ENCODE measurements at regions of chr17 and their contacts with region 1.

Region 1: GRCh38 chr17:28644985-28645939 is at the start of gene BLTP2:
- DNase-seq: peak; percentile 97
- ATAC-seq: peak; percentile 97
- H3K4me3 ChIP-seq: peak within 1 kb of the TSS; percentile 79 to 93 (median 81)
- H3K4me3 Mint-ChIP-seq: peak within 1 kb of the TSS; percentile 97
- H3K27ac ChIP-seq: peak within 1 kb of the TSS; percentile 90 to 94
- H3K27ac Mint-ChIP-seq: peak within 1 kb of the TSS; percentile 89
- H3K4me1 ChIP-seq: peaks cover 32 to 37% of the 10 kb centered on the region in 2 donors
- H3K4me1 Mint-ChIP-seq: peaks cover 36% of the 10 kb centered on the region
- H3K27me3 ChIP-seq: no peaks in the 10 kb centered on the region
- H3K27me3 Mint-ChIP-seq: no peaks in the 10 kb centered on the region
- CTCF ChIP-seq: no peak
- total RNA-seq, gene BLTP2: 156 and 177 TPM in 2 replicates

Region 2: DNA sequence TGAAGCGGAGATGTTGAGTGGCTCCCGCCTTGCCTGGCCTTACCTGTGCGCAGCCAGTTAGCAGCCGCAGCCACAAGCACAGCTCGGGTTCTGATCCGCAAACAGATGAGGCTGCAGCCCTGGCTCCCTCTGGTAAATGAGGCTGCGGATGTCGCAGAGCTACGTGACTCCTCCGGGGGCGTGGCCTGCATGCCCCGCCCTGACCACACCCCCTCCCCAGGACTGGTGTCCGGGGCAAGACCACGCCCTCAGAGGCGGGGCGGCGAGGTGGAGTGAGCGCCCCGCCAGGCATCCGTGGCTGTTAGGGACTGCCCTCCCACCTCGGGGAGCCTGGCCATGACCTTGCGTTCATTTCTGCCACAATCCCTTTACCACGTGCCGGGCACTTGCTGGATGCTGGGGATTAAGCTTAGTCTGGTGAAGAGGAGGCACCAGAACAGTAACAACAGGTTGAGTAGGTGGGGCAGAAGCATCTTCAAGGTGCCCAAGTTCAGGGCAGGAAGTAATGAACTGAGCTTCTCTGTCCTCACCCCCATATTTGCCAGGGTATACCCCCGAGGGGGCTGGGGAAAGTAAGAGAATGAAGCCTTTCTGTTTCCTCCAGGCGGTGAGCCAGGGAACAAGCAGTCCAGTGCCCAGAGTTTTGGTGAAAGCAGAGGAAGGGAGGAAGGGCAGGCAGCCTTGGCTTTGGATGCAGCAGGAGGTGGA is 68.3 kb before region 1 on chr17 and contains the start of gene ALDOC:
- CTCF ChIA-PET with region 1: no interaction called
- POLR2A ChIA-PET with region 1: interaction called, 4 read pairs
- intact Hi-C with region 1: loop called (anchors 1 kb)
- DNase-seq: peak; percentile 97
- ATAC-seq: peak; percentile 100
- H3K4me3 ChIP-seq: peak within 1 kb of the TSS in 4 of 5 experiments; percentile 36 to 58 (median 48)
- H3K4me3 Mint-ChIP-seq: peak within 1 kb of the TSS; percentile 85
- H3K27ac ChIP-seq: peak within 1 kb of the TSS; percentile 34 to 72
- H3K27ac Mint-ChIP-seq: peak within 1 kb of the TSS; percentile 93
- H3K4me1 ChIP-seq: peaks cover 16 to 27% of the 10 kb centered on the region in 2 donors
- H3K4me1 Mint-ChIP-seq: peaks cover 26% of the 10 kb centered on the region
- H3K27me3 ChIP-seq: no peaks in the 10 kb centered on the region
- H3K27me3 Mint-ChIP-seq: no peaks in the 10 kb centered on the region
- CTCF ChIP-seq: no peak
- total RNA-seq, gene ALDOC: 16.7 and 20.7 TPM in 2 replicates

Region 3: DNA sequence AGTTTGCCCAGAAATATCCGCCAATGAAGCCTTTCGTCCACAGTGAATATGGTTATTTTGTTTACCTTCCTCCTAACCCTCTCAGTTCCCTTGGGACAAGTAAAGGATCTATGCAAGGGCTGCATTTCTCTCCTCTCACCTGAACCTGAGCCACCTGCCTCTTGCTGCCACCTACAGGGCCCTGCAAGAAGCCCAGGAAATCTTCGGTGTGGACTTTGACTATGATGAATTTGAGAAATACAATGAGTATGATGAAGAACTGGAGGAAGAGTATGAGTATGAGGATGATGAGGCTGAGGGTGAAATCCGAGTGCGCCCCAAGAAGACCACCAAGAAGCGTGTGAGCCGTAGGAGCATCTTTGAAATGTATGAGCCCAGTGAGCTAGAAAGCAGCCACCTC is 30.7 kb after region 1 on chr17:
- CTCF ChIA-PET with region 1: interaction called, 11 read pairs
- POLR2A ChIA-PET with region 1: no interaction called
- intact Hi-C with region 1: no loop called
- DNase-seq: peak; percentile 27
- ATAC-seq: no peak
- H3K4me3 ChIP-seq: no peak overlapping the region
- H3K4me3 Mint-ChIP-seq: no peak overlapping the region
- H3K27ac ChIP-seq: no peak overlapping the region
- H3K27ac Mint-ChIP-seq: peak overlapping the region; percentile 16
- H3K4me1 ChIP-seq: no peaks in the 10 kb centered on the region
- H3K4me1 Mint-ChIP-seq: no peaks in the 10 kb centered on the region
- H3K27me3 ChIP-seq: no peaks in the 10 kb centered on the region
- H3K27me3 Mint-ChIP-seq: no peaks in the 10 kb centered on the region
- CTCF ChIP-seq: peak; percentile 45

Region 4: GRCh38 chr17:28750178-28751047 is 105.2 kb after region 1 on chr17:
- CTCF ChIA-PET with region 1: interaction called, 13 read pairs
- POLR2A ChIA-PET with region 1: no interaction called
- intact Hi-C with region 1: no loop called
- DNase-seq: peak; percentile 93
- ATAC-seq: peak; percentile 97
- H3K4me3 ChIP-seq: no peak overlapping the region
- H3K4me3 Mint-ChIP-seq: no peak overlapping the region
- H3K27ac ChIP-seq: peak overlapping the region in 1 of 2 donors; percentile 41
- H3K27ac Mint-ChIP-seq: peak overlapping the region; percentile 67
- H3K4me1 ChIP-seq: peaks cover 32 to 34% of the 10 kb centered on the region in 2 donors
- H3K4me1 Mint-ChIP-seq: peaks cover 42% of the 10 kb centered on the region
- H3K27me3 ChIP-seq: no peaks in the 10 kb centered on the region
- H3K27me3 Mint-ChIP-seq: no peaks in the 10 kb centered on the region
- CTCF ChIP-seq: peak; percentile 100

Region 5: DNA sequence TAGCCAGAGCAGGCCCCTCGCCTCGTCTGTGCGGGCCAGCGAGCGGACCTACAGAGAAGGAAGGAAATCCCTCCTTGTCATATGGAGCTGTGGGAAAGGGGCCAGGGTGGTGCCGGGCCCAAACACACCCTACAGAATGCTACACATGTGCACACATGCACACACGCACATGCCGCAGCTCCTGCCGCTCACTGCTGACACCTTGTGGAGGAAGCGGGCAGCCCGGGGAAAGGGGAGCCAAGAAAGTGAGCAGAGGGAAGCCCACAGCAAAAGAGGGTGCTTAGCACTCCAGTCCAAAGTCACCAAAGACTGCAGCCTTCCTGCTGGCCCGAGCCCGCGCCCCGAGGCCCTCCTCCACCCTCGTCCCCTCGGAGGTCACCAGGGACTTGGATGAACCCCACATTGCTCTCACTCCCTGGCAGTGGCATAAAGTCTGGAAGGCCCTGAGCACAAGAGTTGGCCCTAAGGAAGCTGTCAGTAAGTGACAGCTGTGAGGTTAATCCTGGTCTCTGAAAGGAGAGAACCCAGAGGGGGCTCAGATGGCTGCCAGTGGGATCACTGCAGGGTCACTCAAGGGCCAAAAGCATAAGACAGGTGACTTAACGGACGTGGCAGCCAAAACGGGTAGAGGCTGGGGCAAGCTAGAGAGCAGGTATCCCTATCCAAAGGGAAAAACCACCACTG is 466.7 kb after region 1 on chr17:
- CTCF ChIA-PET with region 1: interaction called, 7 read pairs
- POLR2A ChIA-PET with region 1: no interaction called
- intact Hi-C with region 1: loop called (anchors 10 kb)
- DNase-seq: peak; percentile 66
- ATAC-seq: peak; percentile 79
- H3K4me3 ChIP-seq: no peak overlapping the region
- H3K4me3 Mint-ChIP-seq: no peak overlapping the region
- H3K27ac ChIP-seq: no peak overlapping the region
- H3K27ac Mint-ChIP-seq: no peak overlapping the region
- H3K4me1 ChIP-seq: no peaks in the 10 kb centered on the region
- H3K4me1 Mint-ChIP-seq: peaks cover 5% of the 10 kb centered on the region
- H3K27me3 ChIP-seq: no peaks in the 10 kb centered on the region
- H3K27me3 Mint-ChIP-seq: no peaks in the 10 kb centered on the region
- CTCF ChIP-seq: peak; percentile 88

Region 6: GRCh38 chr17:29617125-29617480 is 971.8 kb after region 1 on chr17:
- CTCF ChIA-PET with region 1: no interaction called
- POLR2A ChIA-PET with region 1: interaction called, 10 read pairs
- intact Hi-C with region 1: no loop called
- DNase-seq: peak; percentile 90
- ATAC-seq: peak; percentile 71
- H3K4me3 ChIP-seq: peak overlapping the region in 4 of 5 experiments; percentile 37 to 73 (median 53)
- H3K4me3 Mint-ChIP-seq: peak overlapping the region; percentile 90
- H3K27ac ChIP-seq: no peak overlapping the region
- H3K27ac Mint-ChIP-seq: peak overlapping the region; percentile 64
- H3K4me1 ChIP-seq: peaks cover 56 to 61% of the 10 kb centered on the region in 2 donors
- H3K4me1 Mint-ChIP-seq: peaks cover 47% of the 10 kb centered on the region
- H3K27me3 ChIP-seq: peaks cover 0 to 40% (median 12%) of the 10 kb centered on the region in 4 experiments
- H3K27me3 Mint-ChIP-seq: peaks cover 5% of the 10 kb centered on the region
- CTCF ChIP-seq: peak; percentile 76

Measured in B cell (primary cell).